ENCODE measurements at regions of chr1 and their contacts with region 1.

Region 1: GRCh38 chr1:179706339-179706941 is 36.7 kb upstream of the FAM163A start:
- DNase-seq: no peak
- H3K4me3 ChIP-seq: no peak overlapping the region
- H3K27ac ChIP-seq: no peak overlapping the region
- H3K4me1 ChIP-seq: no peaks in the 10 kb centered on the region
- H3K27me3 ChIP-seq: no peaks in the 10 kb centered on the region
- CTCF ChIP-seq: peak; percentile 21 to 69 (median 55)
- POLR2A ChIP-seq: no peak

Region 2: GRCh38 chr1:179809506-179810366 is 103.3 kb after region 1 on chr1:
- intact Hi-C with region 1: loop called (anchors 10 kb)
- DNase-seq: peak in 1 of 2 donors; percentile 63
- H3K4me3 ChIP-seq: no peak overlapping the region
- H3K27ac ChIP-seq: no peak overlapping the region
- H3K4me1 ChIP-seq: no peaks in the 10 kb centered on the region
- H3K27me3 ChIP-seq: no peaks in the 10 kb centered on the region
- CTCF ChIP-seq: peak; percentile 69 to 83 (median 81)
- POLR2A ChIP-seq: no peak